ENCODE measurements at regions of chr17 and their contacts with region 1.

Region 1: DNA sequence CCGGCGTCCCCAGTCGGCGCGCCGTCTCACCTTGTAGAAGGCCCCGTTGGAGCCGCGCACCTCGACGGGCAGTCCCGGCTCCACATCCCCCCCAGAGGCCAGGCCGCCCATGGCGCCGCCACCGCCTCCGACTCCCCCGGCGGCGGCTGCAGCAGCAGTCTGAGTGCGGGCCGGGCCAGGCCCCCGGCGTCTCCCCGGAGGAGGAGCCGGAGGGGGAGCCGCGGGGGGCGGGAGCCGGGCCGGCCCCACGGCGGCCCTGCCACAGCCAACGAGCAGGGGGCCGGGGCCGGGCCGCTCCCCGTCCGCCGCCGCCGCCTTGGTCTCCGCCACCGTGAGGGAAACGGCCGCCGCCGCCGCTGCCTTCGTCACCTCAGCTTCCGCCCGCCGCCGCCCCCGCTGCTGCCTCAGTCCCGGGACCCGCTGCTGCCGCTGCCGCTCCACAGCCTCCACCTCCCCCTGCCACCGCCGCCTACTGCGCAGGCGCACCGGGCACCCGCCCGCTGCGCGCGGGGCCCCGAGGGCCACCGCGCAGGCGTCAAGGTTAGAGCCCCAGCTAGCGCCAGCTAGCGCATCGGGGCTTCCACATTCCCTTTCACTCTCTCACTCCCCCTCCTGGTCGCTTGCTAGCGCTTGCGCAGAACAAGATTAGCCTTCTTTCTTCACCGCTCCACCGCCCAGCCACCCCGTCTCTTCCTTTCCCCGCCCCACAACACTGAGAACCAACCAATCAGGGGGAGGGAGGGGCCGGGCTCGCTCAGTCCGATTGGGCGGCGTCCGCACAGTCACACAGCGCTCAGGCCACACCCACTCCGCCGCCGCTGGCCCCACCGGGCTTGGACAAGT is at the start of gene FXR2:
- DNase-seq: peak; percentile 93 to 100 (median 99)
- ATAC-seq: peak; percentile 88 to 89 (median 88)
- H3K4me3 ChIP-seq: peak within 1 kb of the TSS; percentile 77 to 78
- H3K4me3 Mint-ChIP-seq: peak within 1 kb of the TSS; percentile 87 to 91 (median 89)
- H3K27ac ChIP-seq: peak within 1 kb of the TSS; percentile 65
- H3K27ac Mint-ChIP-seq: peak within 1 kb of the TSS; percentile 93 to 97
- H3K4me1 ChIP-seq: peaks cover 12 to 31% of the 10 kb centered on the region in 2 experiments
- H3K4me1 Mint-ChIP-seq: peaks cover 37 to 41% (median 39%) of the 10 kb centered on the region in 3 donors
- H3K27me3 ChIP-seq: no peaks in the 10 kb centered on the region
- H3K27me3 Mint-ChIP-seq: no peaks in the 10 kb centered on the region
- total RNA-seq, gene FXR2: 25.4 to 44.7 (median 40.5) TPM

Region 2: DNA sequence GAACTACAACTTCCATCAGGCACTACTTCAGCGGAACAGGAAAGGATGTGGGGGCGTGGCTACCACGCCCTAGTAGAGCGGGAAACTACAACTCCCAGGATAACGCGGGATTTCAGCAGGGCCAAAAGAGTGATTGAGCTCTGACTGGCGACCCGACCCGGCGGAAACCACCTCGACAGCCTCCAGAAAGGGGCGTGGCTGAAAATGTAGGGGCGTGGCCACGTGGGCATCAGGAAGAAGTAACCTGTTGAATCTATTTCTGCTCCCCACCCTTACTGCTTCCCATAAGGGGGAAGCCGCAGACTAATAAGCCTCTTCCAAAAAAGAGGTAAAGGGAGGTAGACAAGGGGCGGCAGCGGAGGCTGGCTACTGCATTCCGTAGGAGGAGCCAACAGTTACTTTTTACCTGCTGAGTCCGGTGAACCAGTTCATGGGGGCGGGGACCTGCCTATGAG is 179.4 kb before region 1 on chr17 and contains the start of gene TMEM102:
- CTCF ChIA-PET with region 1: no interaction called
- POLR2A ChIA-PET with region 1: no interaction called
- DNase-seq: peak; percentile 95 to 99 (median 97)
- ATAC-seq: peak; percentile 82 to 87 (median 84)
- H3K4me3 ChIP-seq: peak within 1 kb of the TSS; percentile 78 to 86
- H3K4me3 Mint-ChIP-seq: peak within 1 kb of the TSS; percentile 92 to 96 (median 93)
- H3K27ac ChIP-seq: peak within 1 kb of the TSS; percentile 83
- H3K27ac Mint-ChIP-seq: peak within 1 kb of the TSS; percentile 95 to 96
- H3K4me1 ChIP-seq: peaks cover 13 to 51% of the 10 kb centered on the region in 2 experiments
- H3K4me1 Mint-ChIP-seq: peaks cover 35 to 43% (median 37%) of the 10 kb centered on the region in 3 donors
- H3K27me3 ChIP-seq: peaks cover 0 to 28% of the 10 kb centered on the region in 2 experiments
- H3K27me3 Mint-ChIP-seq: peaks cover 11 to 13% of the 10 kb centered on the region in 2 donors
- total RNA-seq, gene TMEM102: 8.8 to 26.9 (median 23.5) TPM

Region 3: GRCh38 chr17:7627250-7628121 is 12.8 kb after region 1 on chr17 and contains the start of gene SAT2:
- CTCF ChIA-PET with region 1: interaction called in 1 of 2 experiments, 18 read pairs
- POLR2A ChIA-PET with region 1: interaction called in 1 of 2 experiments, 3 read pairs
- DNase-seq: peak; percentile 70 to 89 (median 79)
- ATAC-seq: peak; percentile 95 to 96 (median 96)
- H3K4me3 ChIP-seq: peak within 1 kb of the TSS; percentile 75 to 87
- H3K4me3 Mint-ChIP-seq: peak within 1 kb of the TSS; percentile 89 to 91 (median 91)
- H3K27ac ChIP-seq: peak within 1 kb of the TSS; percentile 79
- H3K27ac Mint-ChIP-seq: peak within 1 kb of the TSS; percentile 83 to 87
- H3K4me1 ChIP-seq: peaks cover 5 to 20% of the 10 kb centered on the region in 2 experiments
- H3K4me1 Mint-ChIP-seq: peaks cover 14 to 19% (median 18%) of the 10 kb centered on the region in 3 donors
- H3K27me3 ChIP-seq: no peaks in the 10 kb centered on the region
- H3K27me3 Mint-ChIP-seq: no peaks in the 10 kb centered on the region
- total RNA-seq, gene SAT2: 53.2 to 68.8 (median 58.5) TPM